Dendritic cell treated with granulocyte-macrophage colony-stimulating factor and Interleukin-4, amounts not matched to agents 40 ng/mL and 50 ng/mL, for 4 days (primary cell): ENCODE measurements at regions of chr20 and their contacts with region 1.

Region 1: GRCh38 chr20:4413314-4414049 is 308.2 kb upstream of the PRND start:
- H3K4me3 Mint-ChIP-seq: peak overlapping the region; percentile 47
- H3K27ac Mint-ChIP-seq: peak overlapping the region; percentile 23
- H3K4me1 Mint-ChIP-seq: peaks cover 53% of the 10 kb centered on the region
- H3K27me3 Mint-ChIP-seq: no peaks in the 10 kb centered on the region

Region 2: GRCh38 chr20:4326195-4327065 is 87.1 kb before region 1 on chr20:
- intact Hi-C with region 1: loop called (anchors 10 kb)
- H3K4me3 Mint-ChIP-seq: no peak overlapping the region
- H3K27ac Mint-ChIP-seq: no peak overlapping the region
- H3K4me1 Mint-ChIP-seq: peaks cover 39% of the 10 kb centered on the region
- H3K27me3 Mint-ChIP-seq: peaks cover 26% of the 10 kb centered on the region